ENCODE measurements at regions of chr1 and their contacts with region 1.

Region 1: DNA sequence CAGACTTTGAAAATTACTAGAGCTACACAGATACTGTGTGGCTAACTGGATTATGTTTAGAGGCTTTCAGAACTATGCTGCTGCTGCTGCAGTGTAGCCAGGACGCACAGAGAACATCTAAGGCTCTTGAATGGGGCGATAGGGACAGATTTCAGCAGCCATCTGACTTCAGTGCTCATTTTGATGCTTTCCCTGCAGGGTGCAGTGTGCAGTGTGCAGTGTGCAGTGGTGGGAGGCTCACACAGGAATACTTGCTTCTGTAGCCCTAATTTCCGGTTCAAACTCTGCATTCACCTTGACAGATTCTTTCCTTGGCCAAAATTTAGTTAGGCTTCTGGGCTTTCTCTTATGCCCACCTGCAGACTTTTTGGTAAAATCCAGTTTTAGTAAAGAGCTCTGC is 7.7 kb downstream of the METTL18 start:
- DNase-seq: no peak
- ATAC-seq: no peak
- H3K4me3 ChIP-seq: no peak overlapping the region
- H3K4me3 Mint-ChIP-seq: no peak overlapping the region
- H3K27ac ChIP-seq: no peak overlapping the region
- H3K27ac Mint-ChIP-seq: no peak overlapping the region
- H3K4me1 ChIP-seq: no peaks in the 10 kb centered on the region
- H3K4me1 Mint-ChIP-seq: peaks cover 8% of the 10 kb centered on the region
- H3K27me3 ChIP-seq: peaks cover 4 to 24% of the 10 kb centered on the region in 2 experiments
- H3K27me3 Mint-ChIP-seq: peaks cover 37% of the 10 kb centered on the region
- CTCF ChIP-seq: no peak

Region 2: DNA sequence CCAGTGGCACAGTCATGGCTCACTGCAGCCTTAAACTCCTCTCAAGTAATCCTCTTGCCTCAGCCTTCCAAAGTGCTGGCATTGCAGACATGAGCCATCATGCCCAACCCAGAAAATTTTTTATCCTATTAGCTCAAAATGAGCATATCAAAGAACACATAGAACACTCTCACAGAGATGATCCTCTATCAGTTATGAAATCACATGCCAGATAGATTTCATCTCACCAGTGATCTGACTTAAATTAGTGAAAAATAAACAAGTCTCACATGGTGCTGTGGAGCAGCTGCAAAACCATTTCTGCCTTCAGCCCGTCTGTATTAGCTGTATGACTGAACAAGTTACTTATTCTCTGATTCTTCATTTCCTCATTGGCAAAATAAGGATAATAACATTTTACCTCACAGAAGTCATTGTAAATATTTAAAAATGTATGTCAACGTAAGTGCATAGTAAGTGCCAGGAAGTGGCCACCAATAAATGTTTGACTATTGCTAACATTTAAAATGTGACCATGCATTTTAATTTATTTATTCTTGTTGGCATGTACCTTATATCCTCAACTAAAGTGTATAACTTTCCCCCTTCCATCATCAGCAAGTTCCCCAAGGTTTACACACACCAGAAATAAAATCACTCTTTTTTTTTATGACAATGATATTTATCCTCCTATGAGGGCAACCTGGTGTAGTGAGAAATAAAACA is 272.3 kb before region 1 on chr1:
- CTCF ChIA-PET with region 1: no interaction called
- POLR2A ChIA-PET with region 1: no interaction called
- intact Hi-C with region 1: no loop called
- DNase-seq: no peak
- ATAC-seq: no peak
- H3K4me3 ChIP-seq: no peak overlapping the region
- H3K4me3 Mint-ChIP-seq: no peak overlapping the region
- H3K27ac ChIP-seq: no peak overlapping the region
- H3K27ac Mint-ChIP-seq: no peak overlapping the region
- H3K4me1 ChIP-seq: no peaks in the 10 kb centered on the region
- H3K4me1 Mint-ChIP-seq: peaks cover 9% of the 10 kb centered on the region
- H3K27me3 ChIP-seq: no peaks in the 10 kb centered on the region
- H3K27me3 Mint-ChIP-seq: no peaks in the 10 kb centered on the region
- CTCF ChIP-seq: no peak

Region 3: DNA sequence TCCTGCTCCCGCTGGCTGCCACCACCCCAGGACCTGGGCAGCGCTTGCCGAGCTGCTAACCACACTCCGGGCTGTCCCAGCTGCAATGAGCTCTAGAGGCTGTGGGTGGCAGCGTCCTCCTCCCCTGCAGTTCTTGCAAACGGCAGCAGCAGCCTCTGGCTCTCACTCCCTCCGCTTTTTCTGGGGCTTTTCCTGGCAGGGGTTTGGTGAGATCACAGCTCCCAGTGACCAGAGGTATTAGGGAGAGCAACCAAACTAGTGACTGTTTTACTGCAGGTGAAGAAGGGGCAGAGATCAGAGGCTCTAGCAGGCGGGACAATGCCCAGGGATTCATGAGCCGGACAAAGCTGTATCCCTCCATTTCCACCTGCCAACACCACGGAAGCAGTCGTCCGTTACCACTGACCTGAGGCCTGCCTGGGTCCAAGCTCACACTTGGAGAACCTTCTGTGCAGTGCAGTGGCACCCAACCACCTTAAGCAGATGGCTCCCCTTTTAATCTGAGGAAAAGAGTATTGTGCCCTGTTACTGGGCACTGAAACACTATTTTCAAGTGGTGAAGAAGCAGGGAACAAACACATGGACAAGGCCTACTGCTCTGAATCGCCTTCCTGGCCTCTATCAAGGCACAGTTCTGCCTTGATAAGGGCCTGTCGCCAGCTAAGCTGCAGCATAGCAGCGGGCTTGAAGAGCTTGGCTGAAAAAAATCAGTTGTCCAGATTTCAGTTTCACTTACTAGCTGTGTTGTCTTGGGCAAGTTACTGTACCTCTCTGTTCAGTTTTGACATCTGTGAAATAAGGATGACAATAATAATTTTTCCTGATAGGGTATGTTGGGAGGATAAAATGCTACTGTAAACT is 200.3 kb before region 1 on chr1 and contains the start of gene F5:
- CTCF ChIA-PET with region 1: no interaction called
- POLR2A ChIA-PET with region 1: no interaction called
- intact Hi-C with region 1: loop called in 1 of 2 experiments (anchors 5 kb)
- DNase-seq: peak; percentile 65 to 88 (median 72)
- ATAC-seq: peak; percentile 99
- H3K4me3 ChIP-seq: peak within 1 kb of the TSS; percentile 64
- H3K4me3 Mint-ChIP-seq: peak within 1 kb of the TSS; percentile 91
- H3K27ac ChIP-seq: no peak within 1 kb of the TSS
- H3K27ac Mint-ChIP-seq: peak within 1 kb of the TSS; percentile 71
- H3K4me1 ChIP-seq: peaks cover 19% of the 10 kb centered on the region
- H3K4me1 Mint-ChIP-seq: peaks cover 53% of the 10 kb centered on the region
- H3K27me3 ChIP-seq: no peaks in the 10 kb centered on the region
- H3K27me3 Mint-ChIP-seq: no peaks in the 10 kb centered on the region
- CTCF ChIP-seq: peak; percentile 71
- total RNA-seq, gene F5: 5.4 to 6.2 TPM

Region 4: GRCh38 chr1:170460001-170460400 is 673.0 kb after region 1 on chr1:
- CTCF ChIA-PET with region 1: no interaction called
- POLR2A ChIA-PET with region 1: no interaction called
- intact Hi-C with region 1: no loop called
- DNase-seq: no peak
- ATAC-seq: no peak
- H3K4me3 ChIP-seq: no peak overlapping the region
- H3K4me3 Mint-ChIP-seq: no peak overlapping the region
- H3K27ac ChIP-seq: no peak overlapping the region
- H3K27ac Mint-ChIP-seq: no peak overlapping the region
- H3K4me1 ChIP-seq: no peaks in the 10 kb centered on the region
- H3K4me1 Mint-ChIP-seq: no peaks in the 10 kb centered on the region
- H3K27me3 ChIP-seq: no peaks in the 10 kb centered on the region
- H3K27me3 Mint-ChIP-seq: peaks cover 40% of the 10 kb centered on the region
- CTCF ChIP-seq: no peak

Measured in CD4-positive, alpha-beta T cell (primary cell).